ENCODE measurements at regions of chr6 and their contacts with region 1.

Region 1: GRCh38 chr6:137717074-137718073 is 149.7 kb upstream of the TNFAIP3 start:
- DNase-seq: no peak
- H3K4me3 ChIP-seq: no peak overlapping the region
- H3K27ac ChIP-seq: no peak overlapping the region
- H3K4me1 ChIP-seq: no peaks in the 10 kb centered on the region
- H3K27me3 ChIP-seq: peaks cover 0 to 1% (median 0%) of the 10 kb centered on the region in 4 experiments; a peak in 1 of 7 replicates
- CTCF ChIP-seq: no peak
- EP300 ChIP-seq: no peak
- POLR2A ChIP-seq: no peak
- RAD21 ChIP-seq: no peak

Region 2: GRCh38 chr6:137740967-137741761 is 23.8 kb after region 1 on chr6:
- CTCF ChIA-PET with region 1: interaction called, 10 read pairs
- POLR2A ChIA-PET with region 1: no interaction called
- DNase-seq: peak in 1 of 2 experiments; percentile 48
- H3K4me3 ChIP-seq: no peak overlapping the region
- H3K27ac ChIP-seq: no peak overlapping the region
- H3K4me1 ChIP-seq: 0 out of 7 replicates have a peak, but pooled peaks cover 0 to 3% (median under 1%) of the 10 kb centered on the region in 4 experiments
- H3K27me3 ChIP-seq: no peaks in the 10 kb centered on the region
- CTCF ChIP-seq: peak; percentile 34 to 50 (median 40); a peak in 3 of 4 replicates
- EP300 ChIP-seq: no peak
- POLR2A ChIP-seq: no peak
- RAD21 ChIP-seq: peak in 1 of 2 experiments; percentile 14; a peak in 1 of 4 replicates

Measured in H1 (cell line).